Activated naive CD8-positive, alpha-beta T cell treated with anti-CD3 and anti-CD28 coated beads, Interleukin-2, amount 10 ng/mL, durations not matched to agents 7 days and 5 days (primary cell): ENCODE measurements at regions of chr12 and their contacts with region 1.

Region 1: GRCh38 chr12:121579981-121580868 is 598 bp downstream of the KDM2B start:
- DNase-seq: peak; percentile 82
- ATAC-seq: peak; percentile 63
- H3K4me3 Mint-ChIP-seq: peak overlapping the region; percentile 93
- H3K27ac Mint-ChIP-seq: peak overlapping the region; percentile 98
- H3K4me1 Mint-ChIP-seq: peaks cover 31% of the 10 kb centered on the region
- H3K27me3 Mint-ChIP-seq: no peaks in the 10 kb centered on the region

Region 2: GRCh38 chr12:121536899-121537813 is 43.1 kb before region 1 on chr12:
- POLR2A ChIA-PET with region 1: interaction called, 17 read pairs
- DNase-seq: peak; percentile 72
- ATAC-seq: peak; percentile 43
- H3K4me3 Mint-ChIP-seq: peak overlapping the region; percentile 76
- H3K27ac Mint-ChIP-seq: peak overlapping the region; percentile 82
- H3K4me1 Mint-ChIP-seq: peaks cover 44% of the 10 kb centered on the region
- H3K27me3 Mint-ChIP-seq: no peaks in the 10 kb centered on the region

Region 3: DNA sequence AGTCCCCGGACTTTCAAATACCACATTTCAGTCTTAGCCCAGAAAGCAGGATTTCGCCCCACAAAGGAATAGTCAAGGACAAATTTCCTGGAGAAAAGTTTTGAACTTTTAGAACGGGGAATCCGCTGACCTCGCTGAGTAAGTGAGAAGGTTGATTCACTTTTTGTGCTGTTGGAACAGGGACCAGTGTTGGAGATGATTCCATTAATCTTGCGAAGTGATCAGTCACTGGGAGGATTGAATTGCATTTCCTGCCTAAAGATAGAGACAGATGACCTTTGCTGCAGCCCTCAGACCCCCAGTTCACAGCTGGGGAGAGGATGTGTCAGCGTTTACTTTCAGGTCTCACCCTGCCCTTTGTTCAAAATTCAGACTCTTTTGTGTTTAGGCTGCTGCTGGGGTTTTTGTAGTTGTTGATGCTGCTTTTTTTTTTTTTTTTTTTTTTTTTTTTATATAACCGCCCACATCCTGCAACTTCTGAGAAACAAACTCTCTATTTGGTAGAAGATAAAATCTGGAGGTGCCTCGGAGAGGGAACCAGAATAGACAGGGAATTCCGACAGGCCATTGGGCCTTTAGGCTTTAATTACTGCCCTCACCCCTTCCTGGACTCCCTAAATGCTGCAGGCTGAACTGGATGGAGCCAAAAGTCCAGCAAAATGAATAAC is 10.4 kb after region 1 on chr12:
- POLR2A ChIA-PET with region 1: interaction called, 26 read pairs
- DNase-seq: peak; percentile 60
- ATAC-seq: peak; percentile 81
- H3K4me3 Mint-ChIP-seq: peak overlapping the region; percentile 83
- H3K27ac Mint-ChIP-seq: peak overlapping the region; percentile 97
- H3K4me1 Mint-ChIP-seq: peaks cover 29% of the 10 kb centered on the region
- H3K27me3 Mint-ChIP-seq: no peaks in the 10 kb centered on the region

Region 4: GRCh38 chr12:121610239-121611149 is 30.3 kb after region 1 on chr12:
- POLR2A ChIA-PET with region 1: no interaction called
- DNase-seq: no peak
- ATAC-seq: no peak
- H3K4me3 Mint-ChIP-seq: no peak overlapping the region
- H3K27ac Mint-ChIP-seq: no peak overlapping the region
- H3K4me1 Mint-ChIP-seq: peaks cover 3% of the 10 kb centered on the region
- H3K27me3 Mint-ChIP-seq: peaks cover 1% of the 10 kb centered on the region